BJ (cell line): ENCODE measurements at regions of chr4 and their contacts with region 1.

Region 1: DNA sequence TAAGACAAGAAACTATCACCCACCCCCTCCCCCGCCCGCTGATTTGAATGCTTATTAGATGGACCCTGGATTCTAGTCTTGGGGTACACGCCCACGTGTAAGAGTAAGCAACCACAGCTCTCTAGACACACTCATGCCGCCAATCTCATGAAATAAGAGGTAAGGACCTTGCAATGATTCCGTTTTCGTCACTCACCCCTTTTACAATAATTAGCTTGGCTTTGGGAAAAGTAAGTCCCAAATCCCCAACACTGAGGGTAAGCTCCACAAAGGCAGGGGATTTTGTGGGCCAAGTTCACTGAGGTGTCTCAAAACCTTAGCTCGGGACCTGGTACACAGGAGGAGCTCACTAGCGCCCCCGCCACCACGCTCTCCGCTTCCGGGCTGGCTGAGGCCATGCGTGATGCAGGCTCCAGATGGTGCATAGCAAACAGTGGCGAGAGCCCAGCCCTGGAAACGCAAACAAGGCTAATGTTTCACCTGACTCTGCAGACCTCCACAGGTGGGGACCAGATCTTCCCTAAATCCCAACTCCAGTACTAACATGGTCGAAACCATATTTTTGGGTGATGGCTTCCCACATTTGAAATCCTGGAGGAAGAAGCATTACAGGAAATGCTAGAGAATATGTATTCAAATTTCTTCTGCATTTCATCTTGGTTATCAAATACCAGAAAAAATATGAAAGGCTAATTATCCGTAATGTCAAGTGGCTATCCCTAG is 4.1 kb downstream of the PLAC8 start:
- DNase-seq: peak; percentile 32
- H3K4me3 ChIP-seq: peak overlapping the region; percentile 50
- H3K27me3 ChIP-seq: no peaks in the 10 kb centered on the region
- CTCF ChIP-seq: peak; percentile 84

Region 2: DNA sequence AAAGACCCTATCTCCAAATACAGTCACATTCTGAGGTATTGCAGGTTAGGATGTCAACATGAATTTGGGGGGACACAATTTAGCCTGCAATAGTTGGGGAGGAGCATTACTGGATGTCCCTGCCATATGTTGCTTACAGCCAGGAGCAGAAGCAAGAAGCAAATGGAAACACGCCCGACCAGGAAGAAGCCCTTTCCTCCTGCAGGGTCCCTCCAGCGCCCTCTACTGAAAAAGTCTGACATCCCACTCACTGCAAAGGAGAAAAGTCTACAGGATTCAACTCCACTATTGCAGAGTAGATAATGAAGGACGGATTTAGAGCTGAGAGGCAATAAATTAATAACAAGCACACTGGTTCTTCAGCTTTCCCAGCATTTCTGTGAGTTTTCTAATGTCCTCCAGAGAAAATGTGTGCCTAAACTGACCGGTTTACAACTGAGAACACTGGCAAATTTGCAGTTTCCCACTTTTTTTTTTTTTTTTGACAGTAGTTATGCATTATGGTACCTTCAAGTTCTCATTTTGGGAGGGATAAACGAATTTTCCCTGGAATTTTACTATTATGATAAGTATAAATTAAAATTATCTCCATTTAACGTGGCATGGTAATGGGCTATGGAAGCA is 142.5 kb after region 1 on chr4:
- CTCF ChIA-PET with region 1: interaction called, 18 read pairs
- POLR2A ChIA-PET with region 1: interaction called, 5 read pairs
- DNase-seq: no peak
- H3K4me3 ChIP-seq: no peak overlapping the region
- H3K27me3 ChIP-seq: no peaks in the 10 kb centered on the region
- CTCF ChIP-seq: peak; percentile 79